ENCODE measurements at regions of chr2 and their contacts with region 1.

Region 1: GRCh38 chr2:235149240-235149659 is 197.4 kb downstream of the SH3BP4 start:
- DNase-seq: no peak
- H3K4me3 ChIP-seq: no peak overlapping the region
- H3K27ac ChIP-seq: no peak overlapping the region
- H3K4me1 ChIP-seq: no peaks in the 10 kb centered on the region
- H3K27me3 ChIP-seq: peaks cover 0 to 34% (median 0%) of the 10 kb centered on the region in 4 donors
- CTCF ChIP-seq: no peak
- POLR2A ChIP-seq: no peak

Region 2: DNA sequence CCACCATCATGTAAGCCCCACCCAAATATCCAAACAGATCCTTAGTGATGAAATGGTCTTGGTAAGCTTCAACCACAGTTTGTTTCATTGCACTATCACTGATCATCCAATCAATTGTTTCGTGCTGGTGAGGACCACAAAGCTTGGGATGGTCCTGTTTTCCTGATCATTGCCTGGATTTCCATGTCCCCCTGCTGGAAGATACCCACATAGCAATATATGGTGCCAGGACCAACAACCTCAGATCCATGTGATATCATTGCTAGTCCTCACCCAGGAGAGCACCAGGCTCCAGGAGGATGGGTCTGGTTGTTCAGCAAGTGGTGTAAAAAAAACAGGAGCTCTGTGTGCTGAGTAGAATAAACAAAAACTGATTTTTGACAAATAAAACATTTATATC is 403.9 kb before region 1 on chr2:
- intact Hi-C with region 1: no loop called
- DNase-seq: no peak
- H3K4me3 ChIP-seq: no peak overlapping the region
- H3K27ac ChIP-seq: no peak overlapping the region
- H3K4me1 ChIP-seq: no peaks in the 10 kb centered on the region
- H3K27me3 ChIP-seq: peaks cover 0 to 2% (median 0%) of the 10 kb centered on the region in 4 donors
- CTCF ChIP-seq: peak in 1 of 6 experiments; percentile 12
- POLR2A ChIP-seq: no peak

Region 3: DNA sequence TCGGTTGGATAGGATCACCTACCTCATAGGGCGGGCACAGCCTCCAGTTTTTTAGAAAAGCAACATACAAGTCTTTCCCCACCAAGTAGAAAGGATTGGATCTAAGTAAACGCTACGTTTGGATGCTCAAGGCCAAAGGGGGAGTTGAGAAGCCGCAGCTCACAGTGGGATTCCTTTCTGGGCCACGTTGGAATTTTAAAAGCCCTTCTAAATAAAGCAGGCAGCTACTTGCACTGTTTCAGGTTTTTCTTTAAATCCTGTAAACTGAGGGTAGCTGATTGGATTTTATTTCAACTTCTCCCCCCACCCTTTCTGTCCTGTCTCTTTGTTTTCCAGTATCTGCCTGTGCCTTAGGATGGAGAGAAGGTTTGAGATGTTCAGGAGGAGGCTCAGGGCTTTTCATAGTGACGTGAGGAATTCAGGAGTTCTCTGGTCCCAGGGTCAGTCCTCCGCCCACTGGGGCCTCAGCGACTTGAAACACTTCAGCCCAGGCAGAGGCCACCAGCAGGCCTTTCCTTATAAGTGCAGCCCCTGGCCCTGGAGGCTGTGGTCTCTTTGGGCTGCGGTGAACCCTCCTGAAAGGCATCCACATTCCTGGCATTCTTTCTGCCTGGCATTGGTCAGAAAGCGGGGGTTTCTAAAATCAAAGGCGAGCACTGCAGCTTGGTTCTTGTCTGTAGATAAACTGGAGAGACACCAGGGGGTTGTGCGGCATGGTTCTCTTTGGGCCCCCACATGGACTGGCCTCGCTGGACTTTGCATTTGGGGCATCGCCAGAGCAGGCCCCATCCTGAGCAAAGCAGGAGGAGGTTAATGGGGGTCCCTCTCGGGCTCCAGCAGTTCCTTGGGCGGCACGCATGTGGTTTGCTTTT is 152.9 kb before region 1 on chr2:
- intact Hi-C with region 1: no loop called
- DNase-seq: no peak
- H3K4me3 ChIP-seq: no peak overlapping the region
- H3K27ac ChIP-seq: peak overlapping the region in 1 of 4 donors; percentile 40
- H3K4me1 ChIP-seq: peaks cover 0 to 50% (median 0%) of the 10 kb centered on the region in 3 donors
- H3K27me3 ChIP-seq: no peaks in the 10 kb centered on the region
- CTCF ChIP-seq: no peak
- POLR2A ChIP-seq: no peak

Region 4: DNA sequence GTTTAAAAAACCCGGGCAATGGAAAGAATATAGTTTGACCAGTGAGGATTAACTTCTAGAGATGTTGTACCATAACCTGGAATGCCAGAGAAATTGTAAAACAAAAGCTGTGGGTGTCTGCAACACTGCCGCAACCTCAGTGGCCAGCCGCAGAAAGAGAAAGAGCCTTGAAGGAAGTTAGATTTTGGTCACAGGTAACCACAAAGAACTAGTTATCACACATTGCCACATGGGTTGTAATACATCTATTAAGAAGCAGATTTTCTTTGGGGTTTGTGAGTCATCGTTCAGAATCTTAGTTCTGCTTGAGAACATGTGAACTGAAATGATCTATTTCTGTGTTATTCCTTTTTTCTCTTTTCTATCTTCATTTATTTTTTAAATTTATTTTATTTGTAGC is 121.7 kb after region 1 on chr2:
- intact Hi-C with region 1: loop called (anchors 10 kb)
- DNase-seq: no peak
- H3K4me3 ChIP-seq: no peak overlapping the region
- H3K27ac ChIP-seq: no peak overlapping the region
- H3K4me1 ChIP-seq: no peaks in the 10 kb centered on the region
- H3K27me3 ChIP-seq: peaks cover 0 to 17% (median 0%) of the 10 kb centered on the region in 4 donors
- CTCF ChIP-seq: no peak
- POLR2A ChIP-seq: no peak

Region 5: DNA sequence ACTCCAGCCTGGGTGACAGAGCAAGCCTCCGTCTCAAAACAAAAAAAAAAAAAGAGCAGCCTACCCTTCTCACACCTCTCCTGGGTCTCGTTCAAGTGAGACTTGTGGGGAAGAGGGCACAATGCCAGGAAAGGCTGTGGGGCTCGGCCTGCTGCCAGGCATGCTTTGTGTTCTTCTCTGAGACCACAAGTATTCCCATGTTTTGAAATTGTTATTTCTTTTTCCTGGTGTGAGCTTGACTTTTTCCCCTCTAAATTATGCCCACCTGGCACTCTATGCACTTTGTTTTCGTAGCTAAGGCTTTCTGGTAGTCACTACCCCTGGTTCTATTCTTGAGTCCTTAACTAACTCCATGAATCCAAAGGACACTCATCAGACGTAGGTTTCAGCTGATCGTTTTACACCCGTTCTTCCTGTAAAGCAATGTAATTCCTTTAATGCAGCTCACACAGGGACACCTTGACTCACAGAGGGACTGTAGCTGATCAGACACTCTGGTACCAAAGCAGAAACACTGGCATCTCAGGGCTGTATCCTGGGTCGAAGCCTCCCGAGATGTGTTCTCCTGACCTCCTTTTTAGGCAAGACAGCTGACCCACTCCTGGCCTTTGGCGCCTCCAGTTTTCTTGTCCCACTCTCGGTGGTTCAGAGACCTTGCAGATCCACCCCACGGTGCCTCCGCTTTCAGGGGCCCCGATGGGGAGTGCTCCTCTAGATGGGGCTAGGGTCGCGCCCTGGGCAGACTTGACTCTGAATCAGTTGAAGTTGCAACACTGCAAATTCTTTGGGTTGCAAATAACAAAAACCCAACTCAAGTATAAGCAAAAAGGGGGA is 151.3 kb after region 1 on chr2:
- intact Hi-C with region 1: no loop called
- DNase-seq: no peak
- H3K4me3 ChIP-seq: no peak overlapping the region
- H3K27ac ChIP-seq: no peak overlapping the region
- H3K4me1 ChIP-seq: no peaks in the 10 kb centered on the region
- H3K27me3 ChIP-seq: peaks cover 0 to 53% (median 0%) of the 10 kb centered on the region in 4 donors
- CTCF ChIP-seq: no peak
- POLR2A ChIP-seq: no peak

Region 6: GRCh38 chr2:235494716-235495372 is 345.6 kb after region 1 on chr2:
- intact Hi-C with region 1: no loop called
- DNase-seq: no peak
- H3K4me3 ChIP-seq: peak overlapping the region; percentile 57 to 84 (median 67)
- H3K27ac ChIP-seq: peak overlapping the region; percentile 16 to 93 (median 88)
- H3K4me1 ChIP-seq: peaks cover 8 to 36% (median 16%) of the 10 kb centered on the region in 3 donors
- H3K27me3 ChIP-seq: peaks cover 0 to 5% (median 0%) of the 10 kb centered on the region in 4 donors
- CTCF ChIP-seq: no peak
- POLR2A ChIP-seq: no peak

Measured in esophagus squamous epithelium (tissue), 5 donors.